B cell (primary cell): ENCODE measurements at regions of chr2 and their contacts with region 1.

Region 1: GRCh38 chr2:60550178-60550983 is 3.1 kb downstream of the BCL11A start:
- DNase-seq: peak; percentile 94
- ATAC-seq: peak; percentile 54
- H3K4me3 ChIP-seq: peak overlapping the region; percentile 78 to 98 (median 88)
- H3K4me3 Mint-ChIP-seq: peak overlapping the region; percentile 97
- H3K27ac ChIP-seq: peak overlapping the region; percentile 77 to 91
- H3K27ac Mint-ChIP-seq: peak overlapping the region; percentile 91
- H3K4me1 ChIP-seq: peaks cover 29 to 35% of the 10 kb centered on the region in 2 donors
- H3K4me1 Mint-ChIP-seq: peaks cover 36% of the 10 kb centered on the region
- H3K27me3 ChIP-seq: no peaks in the 10 kb centered on the region
- H3K27me3 Mint-ChIP-seq: no peaks in the 10 kb centered on the region
- CTCF ChIP-seq: peak; percentile 80

Region 2: DNA sequence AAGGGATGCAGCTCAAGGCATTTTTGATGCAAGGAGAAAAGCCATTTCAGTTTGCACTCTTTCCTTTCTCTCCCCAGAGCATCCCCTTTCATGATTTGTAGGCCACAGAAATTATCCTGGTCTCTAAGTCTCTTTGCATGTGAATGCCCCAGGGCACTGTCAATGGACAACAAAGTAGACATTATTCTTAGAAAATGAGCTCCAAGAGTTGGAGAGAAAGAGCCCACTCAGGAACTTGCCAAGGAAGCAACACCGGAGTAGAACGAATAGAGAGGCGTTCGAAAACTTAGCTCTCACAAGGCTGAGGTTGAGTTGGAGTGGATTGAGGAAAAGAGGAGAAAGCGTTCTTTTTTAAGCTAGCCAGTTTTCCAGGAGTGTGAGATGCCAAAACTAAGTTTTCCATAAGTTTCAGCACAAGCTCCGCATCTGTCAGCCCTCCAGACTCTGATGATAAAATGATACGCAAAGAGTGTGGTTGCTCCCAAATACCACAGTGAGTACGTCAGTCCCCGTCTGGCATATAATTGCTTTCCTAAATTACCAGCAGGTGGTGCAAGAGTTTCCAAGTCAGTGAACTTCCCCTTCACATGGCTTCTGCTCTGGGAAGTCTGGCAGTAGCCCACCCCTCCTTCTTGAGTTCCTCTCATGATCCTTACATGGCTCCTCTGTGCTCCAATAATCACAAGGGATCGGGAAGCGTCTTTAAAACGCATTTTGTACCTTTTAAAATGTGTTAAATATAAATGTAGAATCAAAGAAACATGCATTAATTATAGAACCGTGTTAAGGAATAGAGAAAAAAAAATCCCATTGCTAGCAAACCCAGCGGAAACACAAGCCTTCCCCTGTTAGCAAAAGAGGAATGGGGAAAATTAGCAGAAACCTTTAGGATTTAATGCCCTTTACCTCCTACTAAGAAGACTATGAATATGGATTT is 1248.6 kb before region 1 on chr2:
- CTCF ChIA-PET with region 1: interaction called, 22 read pairs
- POLR2A ChIA-PET with region 1: interaction called, 8 read pairs
- intact Hi-C with region 1: no loop called
- DNase-seq: peak; percentile 80
- ATAC-seq: peak; percentile 91
- H3K4me3 ChIP-seq: no peak overlapping the region
- H3K4me3 Mint-ChIP-seq: no peak overlapping the region
- H3K27ac ChIP-seq: no peak overlapping the region
- H3K27ac Mint-ChIP-seq: no peak overlapping the region
- H3K4me1 ChIP-seq: no peaks in the 10 kb centered on the region
- H3K4me1 Mint-ChIP-seq: no peaks in the 10 kb centered on the region
- H3K27me3 ChIP-seq: no peaks in the 10 kb centered on the region
- H3K27me3 Mint-ChIP-seq: peaks cover 4% of the 10 kb centered on the region
- CTCF ChIP-seq: peak; percentile 74

Region 3: GRCh38 chr2:60317844-60318243 is 232.5 kb before region 1 on chr2:
- CTCF ChIA-PET with region 1: interaction called, 4 read pairs
- POLR2A ChIA-PET with region 1: interaction called, 3 read pairs
- intact Hi-C with region 1: loop called (anchors 5 kb)
- DNase-seq: peak; percentile 87
- ATAC-seq: peak; percentile 83
- H3K4me3 ChIP-seq: peak overlapping the region in 1 of 5 experiments; percentile 28
- H3K4me3 Mint-ChIP-seq: peak overlapping the region; percentile 46
- H3K27ac ChIP-seq: peak overlapping the region; percentile 56 to 75
- H3K27ac Mint-ChIP-seq: peak overlapping the region; percentile 73
- H3K4me1 ChIP-seq: peaks cover 73 to 74% of the 10 kb centered on the region in 2 donors
- H3K4me1 Mint-ChIP-seq: peaks cover 86% of the 10 kb centered on the region
- H3K27me3 ChIP-seq: no peaks in the 10 kb centered on the region
- H3K27me3 Mint-ChIP-seq: no peaks in the 10 kb centered on the region
- CTCF ChIP-seq: no peak

Region 4: DNA sequence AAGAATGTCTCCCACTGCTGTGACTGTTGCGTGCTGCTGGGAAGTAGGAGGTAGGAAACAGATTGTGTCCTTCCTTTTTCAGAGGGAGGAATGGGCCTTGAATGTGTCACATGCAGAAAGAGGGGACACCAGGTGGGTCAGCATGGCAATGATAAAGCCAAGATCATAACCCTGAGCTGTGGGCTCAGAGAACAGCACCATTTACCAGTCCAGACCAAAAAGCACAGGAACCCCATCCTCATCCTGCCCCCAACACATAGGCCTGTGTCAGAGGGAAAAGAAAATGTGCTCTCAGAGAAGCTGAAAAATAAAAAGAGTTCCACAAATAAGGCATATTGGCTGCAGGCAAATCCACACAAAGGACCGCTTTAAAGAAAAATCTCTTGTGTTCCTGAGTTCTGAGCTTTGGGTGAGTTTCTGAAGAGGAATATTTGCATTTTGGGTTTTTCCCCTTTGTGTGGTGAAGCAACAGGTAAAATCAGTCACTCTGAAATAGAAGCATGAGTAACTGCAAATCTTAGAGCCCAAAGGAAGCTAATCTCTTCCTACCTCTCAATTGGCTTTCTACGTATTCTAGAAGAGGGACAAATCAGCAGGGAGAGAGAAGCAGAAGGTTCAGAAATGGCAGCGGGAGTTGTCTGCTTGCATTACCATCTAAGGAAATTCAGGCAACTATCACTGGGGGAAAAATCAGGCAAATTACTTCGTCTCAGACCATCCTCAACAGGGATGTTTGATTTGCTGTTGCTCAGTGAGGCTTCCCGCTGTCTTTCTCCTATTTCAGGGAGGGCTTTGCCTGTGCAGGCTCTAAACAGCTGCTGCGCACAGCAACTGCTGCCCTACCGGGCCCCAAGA is 103.7 kb before region 1 on chr2:
- CTCF ChIA-PET with region 1: interaction called, 46 read pairs
- POLR2A ChIA-PET with region 1: interaction called, 24 read pairs
- intact Hi-C with region 1: no loop called
- DNase-seq: peak; percentile 83
- ATAC-seq: peak; percentile 72
- H3K4me3 ChIP-seq: peak overlapping the region in 4 of 5 experiments; percentile 7 to 32 (median 28)
- H3K4me3 Mint-ChIP-seq: peak overlapping the region; percentile 77
- H3K27ac ChIP-seq: peak overlapping the region; percentile 88 to 99
- H3K27ac Mint-ChIP-seq: peak overlapping the region; percentile 97
- H3K4me1 ChIP-seq: peaks cover 85 to 87% of the 10 kb centered on the region in 2 donors
- H3K4me1 Mint-ChIP-seq: peaks cover 84% of the 10 kb centered on the region
- H3K27me3 ChIP-seq: no peaks in the 10 kb centered on the region
- H3K27me3 Mint-ChIP-seq: no peaks in the 10 kb centered on the region
- CTCF ChIP-seq: no peak

Region 5: DNA sequence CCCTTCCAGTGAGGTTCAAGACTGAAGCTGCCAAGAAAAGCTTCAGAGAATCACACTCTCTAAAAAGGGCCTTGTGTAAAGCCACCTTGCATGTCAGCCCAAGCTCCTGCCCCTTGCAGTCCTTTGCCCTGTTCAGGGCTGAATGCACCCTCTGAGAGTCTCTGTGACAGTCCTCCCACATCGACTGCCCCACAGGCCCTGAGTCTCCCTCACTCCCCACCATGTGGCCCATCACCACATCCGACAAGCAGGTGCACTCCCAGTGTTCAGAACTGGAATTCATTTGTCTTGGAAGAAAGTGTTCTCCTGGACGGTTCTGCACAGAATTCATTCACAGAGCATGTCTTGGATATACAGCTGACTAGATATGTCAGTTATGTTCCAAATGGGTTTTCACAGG is 27.9 kb before region 1 on chr2:
- CTCF ChIA-PET with region 1: interaction called, 14 read pairs
- POLR2A ChIA-PET with region 1: interaction called, 3 read pairs
- intact Hi-C with region 1: loop called (anchors 2 kb)
- DNase-seq: no peak
- ATAC-seq: no peak
- H3K4me3 ChIP-seq: no peak overlapping the region
- H3K4me3 Mint-ChIP-seq: peak overlapping the region; percentile 40
- H3K27ac ChIP-seq: peak overlapping the region in 1 of 2 donors; percentile 70
- H3K27ac Mint-ChIP-seq: peak overlapping the region; percentile 78
- H3K4me1 ChIP-seq: peaks cover 92 to 100% of the 10 kb centered on the region in 2 donors
- H3K4me1 Mint-ChIP-seq: peaks cover 94% of the 10 kb centered on the region
- H3K27me3 ChIP-seq: no peaks in the 10 kb centered on the region
- H3K27me3 Mint-ChIP-seq: no peaks in the 10 kb centered on the region
- CTCF ChIP-seq: no peak

Region 6: GRCh38 chr2:60674524-60675165 is 124.3 kb after region 1 on chr2:
- CTCF ChIA-PET with region 1: interaction called, 11 read pairs
- POLR2A ChIA-PET with region 1: no interaction called
- intact Hi-C with region 1: no loop called
- DNase-seq: peak; percentile 85
- ATAC-seq: peak; percentile 100
- H3K4me3 ChIP-seq: no peak overlapping the region
- H3K4me3 Mint-ChIP-seq: no peak overlapping the region
- H3K27ac ChIP-seq: no peak overlapping the region
- H3K27ac Mint-ChIP-seq: peak overlapping the region; percentile 50
- H3K4me1 ChIP-seq: peaks cover 0 to 3% of the 10 kb centered on the region in 2 donors
- H3K4me1 Mint-ChIP-seq: peaks cover 4% of the 10 kb centered on the region
- H3K27me3 ChIP-seq: peaks cover 0 to 3% (median 0%) of the 10 kb centered on the region in 4 experiments
- H3K27me3 Mint-ChIP-seq: no peaks in the 10 kb centered on the region
- CTCF ChIP-seq: peak; percentile 93